ENCODE measurements at regions of chr20 and their contacts with region 1.

Region 1: GRCh38 chr20:62808211-62808865 is 3.7 kb downstream of the OGFR start:
- DNase-seq: peak; percentile 57 to 65
- H3K4me3 ChIP-seq: no peak overlapping the region
- H3K27ac ChIP-seq: no peak overlapping the region
- H3K4me1 ChIP-seq: peaks cover 8 to 23% of the 10 kb centered on the region in 2 donors
- H3K27me3 ChIP-seq: no peaks in the 10 kb centered on the region
- CTCF ChIP-seq: peak; percentile 69 to 95 (median 78)
- POLR2A ChIP-seq: no peak

Region 2: GRCh38 chr20:62861726-62862336 is 53.5 kb after region 1 on chr20 and contains the start of gene TCFL5:
- intact Hi-C with region 1: loop called (anchors 2 kb)
- DNase-seq: peak; percentile 79 to 80
- H3K4me3 ChIP-seq: peak within 1 kb of the TSS in 1 of 3 donors; percentile 38
- H3K27ac ChIP-seq: peak within 1 kb of the TSS in 2 of 3 donors; percentile 48 to 62
- H3K4me1 ChIP-seq: peaks cover 17 to 26% of the 10 kb centered on the region in 2 donors
- H3K27me3 ChIP-seq: no peaks in the 10 kb centered on the region
- CTCF ChIP-seq: no peak
- POLR2A ChIP-seq: no peak
- total RNA-seq, gene TCFL5: 15.3 to 26.6 (median 20.6) TPM